H1 (cell line): ENCODE measurements at regions of chr1 and their contacts with region 1.

Region 1: DNA sequence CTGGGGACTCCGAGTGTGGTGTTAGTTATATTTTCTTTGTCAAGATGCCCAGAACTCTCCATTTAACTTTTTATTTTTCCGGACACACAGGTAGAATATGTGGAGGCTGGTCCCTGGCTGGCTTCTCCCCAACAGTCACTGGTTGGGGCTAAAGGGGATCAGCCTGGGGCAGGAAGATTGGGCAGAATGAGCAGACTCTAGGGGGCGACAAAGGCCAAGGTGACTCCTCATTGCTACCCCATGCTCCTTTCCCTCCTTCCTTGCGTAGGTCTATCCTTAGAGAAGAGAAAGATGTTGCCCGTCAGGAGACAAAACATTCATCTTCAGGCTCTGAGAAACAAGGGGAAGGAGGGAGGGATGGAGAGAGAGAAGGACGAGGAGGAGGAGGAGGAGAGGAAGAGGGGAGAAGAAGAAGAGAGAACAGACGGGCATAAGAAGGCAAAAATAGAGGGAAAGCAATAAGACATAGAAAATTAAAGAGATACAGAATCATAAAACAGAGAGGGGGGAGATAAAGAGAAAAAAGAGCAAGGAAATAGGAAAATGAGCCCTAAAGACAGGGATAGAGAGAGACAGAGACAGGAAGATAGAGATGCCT is 89.9 kb downstream of the FOXD2 start:
- DNase-seq: peak in 1 of 2 experiments; percentile 79
- H3K4me3 ChIP-seq: no peak overlapping the region
- H3K27ac ChIP-seq: no peak overlapping the region
- H3K4me1 ChIP-seq: peaks cover 4 to 19% (median 6%) of the 10 kb centered on the region in 4 experiments; a peak in 6 of 7 replicates
- H3K27me3 ChIP-seq: peaks cover 0 to 2% (median 0%) of the 10 kb centered on the region in 4 experiments; a peak in 2 of 7 replicates
- CTCF ChIP-seq: peak; percentile 79 to 89 (median 87)
- EP300 ChIP-seq: no peak
- POLR2A ChIP-seq: no peak
- RAD21 ChIP-seq: peak; percentile 90 to 92

Region 2: DNA sequence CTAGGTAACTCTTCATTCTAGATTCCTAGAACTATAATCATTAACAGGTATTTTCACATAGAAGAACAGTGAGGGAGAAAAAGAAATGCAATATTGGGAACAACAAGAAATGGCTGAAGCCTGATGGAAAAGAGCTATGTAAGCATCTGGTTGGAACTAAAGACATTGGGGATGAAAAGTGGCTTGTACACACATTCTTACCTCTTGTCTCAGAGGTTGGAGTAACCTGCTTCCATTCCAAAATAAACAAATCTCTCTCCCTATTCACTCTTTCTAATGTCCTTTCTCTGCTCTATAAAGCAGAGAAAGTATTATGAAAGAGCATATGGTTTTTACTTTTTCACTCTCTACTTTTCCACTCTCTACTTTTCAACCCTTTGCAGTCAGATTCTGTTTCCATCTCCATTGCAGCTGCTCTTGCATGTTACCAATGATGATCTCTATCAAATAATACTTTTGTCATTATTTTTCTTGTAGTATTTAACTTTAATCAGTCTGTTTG is 156.7 kb before region 1 on chr1:
- CTCF ChIA-PET with region 1: no interaction called
- POLR2A ChIA-PET with region 1: no interaction called
- DNase-seq: no peak
- H3K4me3 ChIP-seq: no peak overlapping the region
- H3K27ac ChIP-seq: no peak overlapping the region
- H3K4me1 ChIP-seq: no peaks in the 10 kb centered on the region
- H3K27me3 ChIP-seq: no peaks in the 10 kb centered on the region
- CTCF ChIP-seq: no peak
- EP300 ChIP-seq: no peak
- POLR2A ChIP-seq: no peak
- RAD21 ChIP-seq: no peak

Region 3: DNA sequence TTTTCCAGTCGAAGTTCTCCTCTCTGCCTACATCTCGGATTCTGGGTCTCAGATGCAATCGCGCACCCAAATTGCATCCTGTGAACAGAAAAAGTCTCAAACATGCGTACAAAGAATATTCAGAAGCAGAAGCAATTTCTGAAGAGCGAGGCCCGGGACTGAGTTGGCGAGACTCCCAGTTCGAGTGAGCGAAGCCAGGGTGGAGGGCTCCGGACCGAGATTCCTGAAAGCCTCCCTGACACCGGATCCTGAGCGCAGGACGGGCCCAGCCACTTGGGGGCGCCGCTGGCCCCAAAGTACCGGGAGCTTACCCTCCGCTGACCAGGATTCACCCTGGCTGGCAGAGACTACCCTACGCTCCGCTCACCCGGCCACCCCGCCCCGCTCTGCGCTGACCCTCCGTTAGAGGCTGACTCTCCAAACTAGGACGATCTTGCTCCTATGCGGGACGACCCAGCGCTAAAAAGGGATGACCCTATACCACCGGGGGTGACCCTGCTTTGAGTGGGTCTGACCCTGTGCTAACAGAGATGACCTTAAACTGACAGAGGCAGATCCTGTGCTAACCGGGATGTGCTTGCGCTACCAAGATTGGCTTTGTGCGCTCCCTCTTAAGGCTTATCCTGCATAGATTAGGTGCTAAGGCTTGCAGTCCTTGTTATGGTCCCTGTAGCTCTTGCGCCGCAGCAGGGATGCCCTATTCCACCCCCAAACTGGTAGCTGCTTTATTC is 77.8 kb before region 1 on chr1:
- CTCF ChIA-PET with region 1: interaction called, 30 read pairs
- POLR2A ChIA-PET with region 1: no interaction called
- DNase-seq: peak in 1 of 2 experiments; percentile 94
- H3K4me3 ChIP-seq: peak overlapping the region in 1 of 4 experiments; percentile 46; a peak in 4 of 8 replicates
- H3K27ac ChIP-seq: no peak overlapping the region
- H3K4me1 ChIP-seq: peaks cover 4 to 24% (median 16%) of the 10 kb centered on the region in 4 experiments
- H3K27me3 ChIP-seq: peaks cover 67 to 74% (median 72%) of the 10 kb centered on the region in 4 experiments
- CTCF ChIP-seq: peak; percentile 87 to 93 (median 93)
- EP300 ChIP-seq: no peak
- POLR2A ChIP-seq: no peak
- RAD21 ChIP-seq: peak; percentile 80 to 87

Region 4: DNA sequence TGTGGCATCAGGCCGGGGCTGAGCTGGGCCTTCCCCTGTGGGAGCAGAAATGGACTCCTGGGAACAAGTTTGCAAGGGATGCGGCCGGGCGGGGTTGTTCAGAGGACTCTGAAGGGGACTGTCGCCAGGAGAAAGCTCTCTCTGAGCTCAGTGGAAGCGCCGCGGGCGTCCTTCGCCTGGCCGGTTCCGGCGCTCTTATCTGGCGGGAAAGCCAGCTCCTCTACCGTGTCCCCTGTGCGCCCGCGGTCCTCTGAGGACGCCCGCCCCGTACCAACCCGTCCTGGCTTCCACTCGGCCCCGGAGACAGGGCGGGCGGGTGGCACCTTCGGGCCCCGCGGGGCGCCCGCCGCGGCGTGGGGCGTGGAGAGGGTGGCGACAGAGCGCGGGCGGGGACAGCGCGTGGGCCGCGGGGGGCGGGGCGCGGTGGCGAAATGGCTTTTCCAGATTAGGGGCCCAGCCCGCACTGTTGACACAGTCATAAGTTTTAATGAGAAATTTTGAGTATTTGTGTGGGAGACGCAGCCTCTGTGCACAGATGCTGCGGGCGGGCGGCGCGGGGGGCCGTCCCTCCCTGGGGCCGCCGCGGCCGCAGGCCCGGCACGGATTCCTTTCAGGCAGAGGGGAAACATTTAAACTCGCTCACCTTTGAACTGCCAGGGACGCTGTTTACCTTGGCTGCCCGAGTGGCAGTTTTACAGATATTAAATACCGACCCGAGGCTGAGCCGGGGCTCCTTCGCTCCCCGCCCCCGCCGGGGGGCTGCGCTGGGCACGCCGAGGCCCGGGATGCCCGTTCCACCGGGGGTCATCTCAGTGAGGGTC is 19.7 kb before region 1 on chr1:
- CTCF ChIA-PET with region 1: interaction called, 11 read pairs
- POLR2A ChIA-PET with region 1: interaction called, 3 read pairs
- DNase-seq: peak in 1 of 2 experiments; percentile 57
- H3K4me3 ChIP-seq: peak overlapping the region; percentile 32 to 66 (median 43)
- H3K27ac ChIP-seq: no peak overlapping the region
- H3K4me1 ChIP-seq: peaks cover 0 to 5% (median 2%) of the 10 kb centered on the region in 4 experiments; a peak in 3 of 7 replicates
- H3K27me3 ChIP-seq: peaks cover 22 to 53% (median 47%) of the 10 kb centered on the region in 4 experiments
- CTCF ChIP-seq: no peak
- EP300 ChIP-seq: no peak
- POLR2A ChIP-seq: no peak
- RAD21 ChIP-seq: no peak

Region 5: GRCh38 chr1:47569681-47570470 is 42.1 kb after region 1 on chr1:
- CTCF ChIA-PET with region 1: interaction called, 32 read pairs
- POLR2A ChIA-PET with region 1: no interaction called
- DNase-seq: no peak
- H3K4me3 ChIP-seq: no peak overlapping the region
- H3K27ac ChIP-seq: no peak overlapping the region
- H3K4me1 ChIP-seq: peaks cover 6 to 21% (median 16%) of the 10 kb centered on the region in 4 experiments
- H3K27me3 ChIP-seq: peaks cover 0 to 3% (median 2%) of the 10 kb centered on the region in 4 experiments; a peak in 2 of 7 replicates
- CTCF ChIP-seq: peak in 2 of 3 experiments; percentile 38 to 54; a peak in 3 of 4 replicates
- EP300 ChIP-seq: no peak
- POLR2A ChIP-seq: no peak
- RAD21 ChIP-seq: peak in 1 of 2 experiments; percentile 46; a peak in 3 of 4 replicates

Region 6: DNA sequence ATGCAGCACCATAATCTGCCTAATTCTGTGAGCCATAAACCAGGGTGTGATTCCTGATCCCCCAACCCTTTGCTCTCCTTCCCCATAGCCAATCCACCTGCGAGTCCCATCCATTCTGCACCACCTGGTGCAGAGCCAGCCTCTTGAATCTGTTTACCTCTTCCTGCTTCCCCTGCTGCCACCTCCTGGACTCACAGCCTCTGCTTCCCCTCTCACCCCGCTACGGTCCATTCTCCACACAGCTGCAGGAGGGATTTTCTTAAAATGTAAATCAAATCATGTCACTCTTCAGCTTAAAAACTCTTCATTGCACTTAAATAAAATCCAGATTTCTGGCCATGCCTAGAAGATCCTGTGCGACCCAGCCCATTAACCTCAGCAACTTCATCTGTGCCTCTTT is 96.8 kb after region 1 on chr1:
- CTCF ChIA-PET with region 1: interaction called, 151 read pairs
- POLR2A ChIA-PET with region 1: no interaction called
- DNase-seq: peak; percentile 29 to 55
- H3K4me3 ChIP-seq: no peak overlapping the region
- H3K27ac ChIP-seq: no peak overlapping the region
- H3K4me1 ChIP-seq: no peaks in the 10 kb centered on the region; a peak in 1 of 7 replicates
- H3K27me3 ChIP-seq: peaks cover 0 to 2% (median 0%) of the 10 kb centered on the region in 4 experiments; a peak in 2 of 7 replicates
- CTCF ChIP-seq: peak; percentile 83 to 99 (median 91)
- EP300 ChIP-seq: no peak
- POLR2A ChIP-seq: no peak
- RAD21 ChIP-seq: peak; percentile 84 to 86

Region 7: GRCh38 chr1:47720111-47720510 is 192.4 kb after region 1 on chr1:
- CTCF ChIA-PET with region 1: interaction called, 46 read pairs
- POLR2A ChIA-PET with region 1: no interaction called
- DNase-seq: no peak
- H3K4me3 ChIP-seq: no peak overlapping the region
- H3K27ac ChIP-seq: no peak overlapping the region
- H3K4me1 ChIP-seq: peaks cover 2 to 9% (median 7%) of the 10 kb centered on the region in 4 experiments
- H3K27me3 ChIP-seq: peaks cover 7 to 25% (median 23%) of the 10 kb centered on the region in 4 experiments
- CTCF ChIP-seq: no peak
- EP300 ChIP-seq: no peak
- POLR2A ChIP-seq: no peak
- RAD21 ChIP-seq: no peak